MCF 10A (cell line): ENCODE measurements at regions of chr10 and their contacts with region 1.

Region 1: DNA sequence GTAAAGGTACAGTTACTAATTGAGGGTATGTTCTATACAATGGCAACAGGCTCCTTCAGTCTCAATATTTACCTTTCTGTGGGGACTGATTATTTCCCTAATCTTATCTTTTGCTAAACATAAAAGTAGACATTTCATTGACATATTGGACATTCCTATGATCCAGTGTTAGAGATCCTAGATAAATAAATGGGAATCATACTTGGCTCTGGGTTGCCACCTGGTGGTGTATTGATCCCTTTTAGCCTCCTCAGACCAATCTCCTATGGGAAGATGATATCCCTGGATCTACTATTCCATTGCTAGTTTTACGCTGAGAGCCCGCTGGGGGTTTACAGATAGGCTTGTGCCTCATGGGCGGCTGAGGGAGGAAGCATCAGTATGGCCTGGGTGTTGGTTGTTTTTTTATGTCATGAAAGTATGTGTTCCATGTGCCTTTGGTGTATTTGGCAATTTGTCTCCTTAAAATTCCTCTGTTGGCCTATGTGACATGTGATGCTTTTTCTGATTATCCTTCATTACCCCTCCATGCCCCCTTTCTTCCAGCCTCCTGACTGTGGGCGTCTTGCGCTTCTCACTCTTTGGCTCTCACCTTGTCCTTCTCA is 18.8 kb downstream of the CELF2 start:
- DNase-seq: peak; percentile 70
- H3K4me3 Mint-ChIP-seq: no peak overlapping the region
- H3K27ac Mint-ChIP-seq: no peak overlapping the region
- H3K4me1 Mint-ChIP-seq: peaks cover 6% of the 10 kb centered on the region
- H3K27me3 Mint-ChIP-seq: no peaks in the 10 kb centered on the region
- CTCF ChIP-seq: peak; percentile 56

Region 2: GRCh38 chr10:9342885-9343570 is 1693.5 kb before region 1 on chr10:
- CTCF ChIA-PET with region 1: interaction called, 49 read pairs
- POLR2A ChIA-PET with region 1: interaction called, 6 read pairs
- intact Hi-C with region 1: loop called (anchors 1 kb)
- DNase-seq: peak; percentile 59
- H3K4me3 Mint-ChIP-seq: no peak overlapping the region
- H3K27ac Mint-ChIP-seq: no peak overlapping the region
- H3K4me1 Mint-ChIP-seq: no peaks in the 10 kb centered on the region
- H3K27me3 Mint-ChIP-seq: no peaks in the 10 kb centered on the region
- CTCF ChIP-seq: peak; percentile 67

Region 3: DNA sequence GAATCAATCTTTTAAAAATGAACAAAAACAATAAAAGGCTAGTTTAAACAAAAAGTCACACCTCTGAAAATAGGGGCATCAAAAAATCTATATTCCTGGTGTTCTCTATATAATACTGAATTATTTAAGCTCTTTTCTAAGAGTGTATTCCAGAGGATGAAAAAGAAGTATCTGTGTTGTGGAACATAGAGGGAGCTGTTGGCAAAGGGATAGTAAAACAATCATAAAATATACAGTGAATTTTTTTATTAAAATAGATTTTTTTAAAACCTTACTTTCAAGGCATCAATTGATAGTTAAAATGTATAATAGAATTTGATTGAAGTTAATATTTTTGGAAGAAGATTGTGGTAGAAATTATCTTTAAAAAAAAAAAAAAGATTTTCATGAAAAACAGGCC is 1427.9 kb before region 1 on chr10:
- CTCF ChIA-PET with region 1: interaction called, 31 read pairs
- POLR2A ChIA-PET with region 1: no interaction called
- intact Hi-C with region 1: loop called (anchors 1 kb)
- DNase-seq: peak; percentile 27
- H3K4me3 Mint-ChIP-seq: no peak overlapping the region
- H3K27ac Mint-ChIP-seq: no peak overlapping the region
- H3K4me1 Mint-ChIP-seq: peaks cover 29% of the 10 kb centered on the region
- H3K27me3 Mint-ChIP-seq: no peaks in the 10 kb centered on the region
- CTCF ChIP-seq: peak; percentile 55

Region 4: GRCh38 chr10:10605551-10606081 is 430.9 kb before region 1 on chr10:
- CTCF ChIA-PET with region 1: no interaction called
- POLR2A ChIA-PET with region 1: interaction called, 3 read pairs
- intact Hi-C with region 1: loop called (anchors 10 kb)
- DNase-seq: peak; percentile 90
- H3K4me3 Mint-ChIP-seq: peak overlapping the region; percentile 3
- H3K27ac Mint-ChIP-seq: peak overlapping the region; percentile 97
- H3K4me1 Mint-ChIP-seq: peaks cover 11% of the 10 kb centered on the region
- H3K27me3 Mint-ChIP-seq: no peaks in the 10 kb centered on the region
- CTCF ChIP-seq: no peak

Region 5: GRCh38 chr10:10734356-10735064 is 302.0 kb before region 1 on chr10:
- CTCF ChIA-PET with region 1: no interaction called
- POLR2A ChIA-PET with region 1: no interaction called
- intact Hi-C with region 1: no loop called
- DNase-seq: no peak
- H3K4me3 Mint-ChIP-seq: no peak overlapping the region
- H3K27ac Mint-ChIP-seq: no peak overlapping the region
- H3K4me1 Mint-ChIP-seq: no peaks in the 10 kb centered on the region
- H3K27me3 Mint-ChIP-seq: no peaks in the 10 kb centered on the region
- CTCF ChIP-seq: no peak

Region 6: DNA sequence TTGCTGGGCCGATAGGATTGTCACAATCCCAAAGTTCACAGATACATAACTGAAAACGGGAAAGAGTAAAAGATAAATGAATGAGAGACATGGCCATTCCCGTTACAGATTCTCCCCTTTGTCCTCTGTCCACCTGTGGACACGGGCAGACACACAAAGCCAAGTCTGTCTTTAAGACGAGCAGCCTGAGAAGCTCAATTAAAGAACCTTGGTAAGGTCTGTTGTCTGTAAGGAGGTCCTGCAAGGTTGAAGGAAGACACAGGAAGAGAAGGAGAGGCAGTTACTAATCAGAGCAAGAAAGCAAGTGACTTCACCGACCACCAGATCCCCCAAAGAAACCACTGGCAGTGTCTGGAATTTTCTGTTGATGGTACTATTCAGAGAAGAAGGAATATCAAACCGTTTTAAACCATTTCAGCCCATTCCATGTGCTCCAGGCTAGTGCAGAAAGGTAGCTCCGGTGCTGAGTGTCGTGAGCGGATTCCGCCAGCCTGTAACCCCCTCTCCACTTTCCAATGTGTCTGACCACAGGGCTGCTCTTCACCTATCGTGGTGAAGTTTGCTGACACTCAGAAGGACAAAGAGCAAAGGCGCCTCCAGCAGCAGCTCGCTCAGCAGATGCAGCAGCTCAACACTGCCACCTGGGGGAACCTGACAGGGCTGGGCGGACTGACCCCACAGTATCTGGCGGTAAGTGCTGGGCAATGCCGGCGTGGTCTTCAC is 233.8 kb after region 1 on chr10:
- CTCF ChIA-PET with region 1: interaction called, 3 read pairs
- POLR2A ChIA-PET with region 1: no interaction called
- intact Hi-C with region 1: loop called (anchors 5 kb)
- DNase-seq: peak; percentile 65
- H3K4me3 Mint-ChIP-seq: no peak overlapping the region
- H3K27ac Mint-ChIP-seq: no peak overlapping the region
- H3K4me1 Mint-ChIP-seq: no peaks in the 10 kb centered on the region
- H3K27me3 Mint-ChIP-seq: peaks cover 38% of the 10 kb centered on the region
- CTCF ChIP-seq: peak; percentile 81